Pancreas (tissue), 10 donors: ENCODE measurements at regions of chr6 and their contacts with region 1.

Region 1: DNA sequence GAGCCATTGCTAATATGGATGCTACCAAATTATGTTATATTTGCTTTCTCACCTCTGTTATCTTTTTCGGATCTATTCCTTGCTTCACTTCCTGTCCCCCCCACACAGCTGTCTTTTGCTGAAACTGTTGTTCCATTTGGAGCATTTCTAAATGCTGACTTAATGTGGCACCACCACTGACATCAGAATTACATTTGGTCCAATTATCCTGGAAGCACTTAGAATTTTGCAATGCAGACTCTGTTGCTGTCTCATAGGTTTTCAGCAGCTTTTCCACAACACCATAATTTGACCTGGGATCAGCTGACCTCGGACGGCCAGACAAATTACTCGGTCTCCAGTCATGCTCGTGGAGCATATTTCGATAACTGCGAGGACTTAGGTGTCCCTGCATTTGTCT is 12.8 kb downstream of the KIAA0408 start:
- DNase-seq: no peak
- ATAC-seq: no peak
- H3K4me3 ChIP-seq: no peak overlapping the region
- H3K27ac ChIP-seq: no peak overlapping the region
- H3K4me1 ChIP-seq: no peaks in the 10 kb centered on the region
- H3K27me3 ChIP-seq: no peaks in the 10 kb centered on the region
- CTCF ChIP-seq: no peak

Region 2: DNA sequence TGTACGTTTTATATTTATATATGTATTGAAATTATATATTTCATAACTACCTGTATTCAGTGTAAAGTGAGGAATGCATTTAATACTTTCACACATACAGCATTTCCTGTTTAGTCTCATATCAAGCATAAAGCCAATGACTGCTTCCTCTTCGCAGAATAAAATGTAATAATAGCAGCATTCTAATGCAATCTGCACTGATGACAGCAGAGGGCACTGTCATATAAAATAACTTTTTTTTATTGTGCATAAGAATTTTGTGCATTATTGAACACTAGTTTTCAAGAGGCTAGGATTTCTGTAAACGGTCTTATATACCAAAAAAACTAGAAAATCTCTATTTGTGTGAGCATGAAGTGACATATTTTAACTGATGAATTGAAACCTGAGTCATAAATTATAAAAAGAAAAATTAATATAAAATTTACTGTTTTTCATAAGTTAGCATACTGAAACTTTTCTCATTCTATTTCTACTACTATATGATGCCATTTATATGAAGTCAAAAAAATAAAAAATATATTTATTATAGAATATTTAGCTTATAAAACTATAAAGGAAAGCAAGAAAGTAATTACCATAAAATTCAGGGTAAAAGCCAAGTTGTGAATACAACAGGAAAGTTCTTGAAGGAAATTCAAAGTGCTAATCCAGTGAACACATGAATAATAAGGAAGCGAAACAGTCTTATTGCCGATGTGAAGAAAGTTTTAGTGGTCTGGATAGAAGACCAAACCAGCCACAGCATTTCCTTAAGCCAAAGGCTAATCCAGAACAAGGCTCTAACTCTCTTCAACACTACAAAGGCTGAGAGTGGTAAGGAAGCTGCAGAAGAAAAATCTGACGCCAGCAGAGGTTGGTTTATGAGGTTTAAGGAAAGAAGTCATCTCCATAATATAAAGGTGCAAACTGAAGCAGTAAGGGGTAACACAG is 143.4 kb before region 1 on chr6:
- intact Hi-C with region 1: loop called in 1 of 3 experiments (anchors 10 kb)
- DNase-seq: peak in 1 of 6 donors; percentile 41
- ATAC-seq: peak; percentile 69 to 93 (median 82)
- H3K4me3 ChIP-seq: no peak overlapping the region
- H3K27ac ChIP-seq: no peak overlapping the region
- H3K4me1 ChIP-seq: peaks cover 0 to 14% (median 12%) of the 10 kb centered on the region in 3 donors
- H3K27me3 ChIP-seq: no peaks in the 10 kb centered on the region
- CTCF ChIP-seq: peak; percentile 21 to 67 (median 34)

Region 3: DNA sequence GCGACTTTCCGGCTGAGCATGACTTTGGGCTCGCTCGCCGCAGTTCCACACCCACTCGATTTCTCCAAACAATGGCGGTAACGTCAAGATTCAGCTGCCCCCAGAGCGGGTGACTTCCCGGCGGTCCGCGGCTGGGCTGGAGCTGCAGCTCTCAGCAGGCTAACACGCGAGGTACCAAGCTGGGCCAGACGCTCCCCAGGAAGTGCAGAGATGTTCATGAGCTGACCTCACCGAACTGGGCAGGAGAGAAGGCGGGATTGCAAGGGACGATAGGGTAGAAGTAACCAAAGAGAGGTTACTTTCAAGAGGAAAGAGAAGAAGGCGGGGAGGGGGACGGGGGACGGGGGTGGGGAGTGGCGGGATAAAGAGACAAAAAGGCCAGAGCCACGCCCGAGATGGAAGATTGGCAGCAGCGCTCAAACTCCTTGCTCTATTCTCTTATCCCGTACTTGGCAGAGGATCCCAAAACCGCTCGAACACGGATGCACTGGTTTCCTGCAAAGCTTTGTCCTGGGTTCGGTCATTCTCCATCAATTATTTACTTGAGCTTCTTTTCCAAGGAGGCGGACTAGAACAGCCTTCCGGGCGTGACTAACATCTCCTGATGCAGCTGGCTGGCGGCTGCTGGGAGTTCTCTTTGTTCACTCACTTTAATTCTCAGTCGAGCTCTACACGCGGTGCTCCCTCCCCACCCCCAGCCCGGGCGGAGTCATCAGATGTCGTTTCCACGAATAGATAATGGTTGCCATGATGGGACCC is 72.5 kb after region 1 on chr6 and contains the start of gene MTCL3:
- intact Hi-C with region 1: no loop called
- DNase-seq: peak in 2 of 6 donors; percentile 12 to 47
- ATAC-seq: peak in 2 of 4 donors; percentile 17 to 33
- H3K4me3 ChIP-seq: no peak within 1 kb of the TSS
- H3K27ac ChIP-seq: no peak within 1 kb of the TSS
- H3K4me1 ChIP-seq: peaks cover 0 to 8% (median 8%) of the 10 kb centered on the region in 3 donors
- H3K27me3 ChIP-seq: peaks cover 4 to 48% (median 20%) of the 10 kb centered on the region in 4 donors
- CTCF ChIP-seq: no peak

Region 4: DNA sequence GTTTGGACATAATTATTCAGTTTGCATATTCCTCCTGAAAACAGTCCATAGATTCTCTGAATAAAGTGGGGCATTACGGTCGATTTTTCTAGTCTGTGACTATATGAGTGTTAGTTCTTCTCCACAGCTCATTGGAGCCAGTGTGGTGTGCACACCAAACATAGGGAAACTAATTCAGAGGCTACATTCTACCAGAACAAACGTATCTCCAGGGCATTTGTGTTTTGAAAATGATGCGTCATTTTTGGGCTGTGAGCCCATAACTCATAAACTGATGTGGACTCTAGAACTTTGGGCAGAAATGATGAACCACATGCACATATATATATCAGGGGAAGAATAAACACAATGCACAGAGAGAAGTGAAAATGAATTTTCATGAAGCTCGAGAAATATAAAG is 172.4 kb after region 1 on chr6:
- intact Hi-C with region 1: no loop called
- DNase-seq: no peak
- ATAC-seq: no peak
- H3K4me3 ChIP-seq: no peak overlapping the region
- H3K27ac ChIP-seq: no peak overlapping the region
- H3K4me1 ChIP-seq: no peaks in the 10 kb centered on the region
- H3K27me3 ChIP-seq: no peaks in the 10 kb centered on the region
- CTCF ChIP-seq: no peak